Right lobe of liver (tissue), 6 donors: ENCODE measurements at regions of chr4 and their contacts with region 1.

Region 1: GRCh38 chr4:41882625-41883347 is 52.4 kb upstream of the TMEM33 start:
- DNase-seq: no peak
- ATAC-seq: peak in 3 of 4 donors; percentile 22 to 43 (median 30)
- H3K4me3 ChIP-seq: no peak overlapping the region
- H3K27ac ChIP-seq: no peak overlapping the region
- H3K4me1 ChIP-seq: peaks cover 0 to 54% (median 17%) of the 10 kb centered on the region in 4 donors
- H3K27me3 ChIP-seq: no peaks in the 10 kb centered on the region
- CTCF ChIP-seq: peak; percentile 20 to 62 (median 52)
- POLR2A ChIP-seq: no peak

Region 2: DNA sequence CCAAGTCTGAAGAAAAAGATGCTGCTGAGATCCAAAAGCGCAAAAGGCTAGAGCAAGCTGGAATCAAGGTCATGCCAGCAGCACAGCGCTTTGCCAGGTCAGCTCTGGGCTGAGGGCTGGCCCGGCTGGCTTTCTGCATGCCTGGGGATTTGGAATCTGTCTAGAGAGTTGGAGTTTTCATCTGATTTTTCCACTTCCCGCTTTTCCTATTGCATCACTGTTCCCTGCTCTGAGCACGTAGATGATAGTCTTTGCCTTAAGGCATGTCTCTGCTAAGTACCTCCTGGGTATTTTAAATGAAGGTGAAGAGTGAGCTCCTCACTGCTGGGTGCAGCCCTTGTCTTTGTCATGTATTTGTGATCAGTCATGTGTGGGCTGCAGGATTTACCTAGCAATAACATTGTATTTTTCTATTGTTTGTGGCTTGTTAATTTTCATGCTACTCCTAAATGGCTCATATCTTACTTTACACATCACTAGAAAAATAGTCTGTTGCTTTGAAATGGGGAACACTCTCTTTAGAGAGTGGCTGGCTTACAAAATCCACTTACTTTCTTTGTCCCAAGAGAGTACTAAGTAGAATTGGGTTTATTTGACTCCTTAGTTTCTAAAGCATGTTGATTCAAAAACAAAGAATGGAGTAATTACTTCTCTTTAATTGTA is 262.1 kb before region 1 on chr4:
- intact Hi-C with region 1: no loop called
- DNase-seq: no peak
- ATAC-seq: no peak
- H3K4me3 ChIP-seq: no peak overlapping the region
- H3K27ac ChIP-seq: no peak overlapping the region
- H3K4me1 ChIP-seq: no peaks in the 10 kb centered on the region
- H3K27me3 ChIP-seq: no peaks in the 10 kb centered on the region
- CTCF ChIP-seq: no peak
- POLR2A ChIP-seq: no peak

Region 3: GRCh38 chr4:41692717-41693345 is 190.0 kb before region 1 on chr4:
- intact Hi-C with region 1: loop called in 1 of 2 experiments (anchors 10 kb)
- DNase-seq: peak in 2 of 3 donors; percentile 37 to 58
- ATAC-seq: peak; percentile 94 to 98 (median 97)
- H3K4me3 ChIP-seq: no peak overlapping the region
- H3K27ac ChIP-seq: no peak overlapping the region
- H3K4me1 ChIP-seq: no peaks in the 10 kb centered on the region
- H3K27me3 ChIP-seq: no peaks in the 10 kb centered on the region
- CTCF ChIP-seq: peak; percentile 86 to 93 (median 89)
- POLR2A ChIP-seq: no peak